ENCODE measurements at regions of chr3 and their contacts with region 1.

Region 1: DNA sequence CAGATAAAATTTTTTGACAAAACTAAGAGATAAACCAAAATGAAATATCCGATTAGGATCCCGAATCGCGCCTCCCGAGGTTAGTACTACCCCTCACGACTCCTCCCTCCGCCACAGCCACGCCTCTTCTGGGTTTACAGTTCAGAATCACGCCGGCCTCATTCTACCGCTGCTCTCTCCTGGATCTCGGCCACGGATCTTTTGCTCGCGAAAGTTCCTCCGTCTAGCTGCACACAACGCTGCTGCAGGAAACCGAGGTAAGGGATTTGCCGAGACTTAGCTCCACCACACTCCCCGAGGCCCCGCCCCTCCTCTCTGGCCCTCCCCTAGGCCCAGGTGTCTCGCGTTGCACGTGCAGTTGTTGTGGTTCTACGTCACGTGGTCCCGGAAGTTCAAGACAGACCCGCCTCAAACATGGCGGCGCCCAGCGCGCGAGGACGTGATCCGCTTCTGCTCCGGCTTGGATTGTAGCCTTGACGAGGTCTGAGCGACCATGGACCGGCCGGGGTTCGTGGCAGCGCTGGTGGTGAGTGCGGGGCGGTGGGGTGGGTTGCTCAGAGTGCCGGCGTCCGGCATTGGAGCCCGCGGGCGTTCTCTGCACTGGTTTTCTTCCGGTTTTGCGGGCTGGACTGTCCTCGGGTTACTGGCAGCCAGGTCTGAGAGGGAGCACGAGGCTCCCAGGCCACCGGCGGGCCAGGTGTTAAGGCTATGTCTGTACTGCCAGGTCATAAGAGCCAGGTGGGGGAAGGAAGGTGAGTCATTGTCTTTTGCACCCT is at the start of gene SLC25A26:
- DNase-seq: peak; percentile 96
- H3K4me3 Mint-ChIP-seq: peak within 1 kb of the TSS; percentile 93
- H3K27ac Mint-ChIP-seq: peak within 1 kb of the TSS; percentile 93
- H3K4me1 Mint-ChIP-seq: peaks cover 28% of the 10 kb centered on the region
- H3K27me3 Mint-ChIP-seq: no peaks in the 10 kb centered on the region
- total RNA-seq, gene SLC25A26: 15.5 and 16.9 TPM in 2 replicates

Region 2: DNA sequence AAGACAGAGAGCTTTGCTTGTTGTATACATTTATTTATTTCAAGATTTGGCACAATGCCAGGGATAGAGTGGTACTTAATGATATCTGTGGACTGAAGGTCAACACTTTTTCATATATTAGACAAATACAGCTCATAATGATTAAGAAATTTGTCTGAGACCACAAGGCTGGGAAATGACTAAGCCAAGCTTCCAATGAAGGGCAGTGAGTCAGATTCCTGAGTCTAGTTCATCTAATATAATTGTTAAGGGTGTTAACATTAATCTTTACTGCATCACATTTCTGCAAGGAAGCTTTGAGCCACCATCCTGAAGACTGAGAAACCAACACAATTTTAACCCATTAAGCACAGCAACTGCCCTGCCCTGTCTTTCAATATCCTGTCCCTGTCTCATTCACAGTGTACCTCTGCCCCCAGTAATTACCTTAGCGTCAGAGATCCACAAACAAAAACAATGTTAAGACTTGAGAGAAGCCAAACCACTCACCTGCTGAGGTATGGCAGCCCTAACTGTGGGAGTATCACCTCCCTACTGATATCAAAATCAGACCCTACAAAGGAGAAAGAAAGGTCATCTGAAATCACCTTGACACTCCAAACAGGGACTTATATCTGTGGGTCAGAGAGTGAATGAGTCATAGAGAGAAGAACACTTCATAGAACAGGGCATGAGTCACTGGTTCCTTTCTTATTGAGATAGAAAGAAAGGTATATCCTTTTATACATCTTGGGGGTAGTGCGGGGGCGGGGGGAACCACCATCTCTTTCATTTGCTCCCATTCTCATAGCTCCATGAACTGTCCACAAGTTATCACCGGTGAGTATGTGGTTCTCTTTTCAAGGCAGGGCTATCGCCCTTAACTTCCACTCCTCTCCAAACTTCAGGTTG is 256.8 kb before region 1 on chr3:
- intact Hi-C with region 1: loop called (anchors 5 kb)
- DNase-seq: no peak
- H3K4me3 Mint-ChIP-seq: peak overlapping the region; percentile 32
- H3K27ac Mint-ChIP-seq: peak overlapping the region; percentile 96
- H3K4me1 Mint-ChIP-seq: peaks cover 33% of the 10 kb centered on the region
- H3K27me3 Mint-ChIP-seq: no peaks in the 10 kb centered on the region

Region 3: DNA sequence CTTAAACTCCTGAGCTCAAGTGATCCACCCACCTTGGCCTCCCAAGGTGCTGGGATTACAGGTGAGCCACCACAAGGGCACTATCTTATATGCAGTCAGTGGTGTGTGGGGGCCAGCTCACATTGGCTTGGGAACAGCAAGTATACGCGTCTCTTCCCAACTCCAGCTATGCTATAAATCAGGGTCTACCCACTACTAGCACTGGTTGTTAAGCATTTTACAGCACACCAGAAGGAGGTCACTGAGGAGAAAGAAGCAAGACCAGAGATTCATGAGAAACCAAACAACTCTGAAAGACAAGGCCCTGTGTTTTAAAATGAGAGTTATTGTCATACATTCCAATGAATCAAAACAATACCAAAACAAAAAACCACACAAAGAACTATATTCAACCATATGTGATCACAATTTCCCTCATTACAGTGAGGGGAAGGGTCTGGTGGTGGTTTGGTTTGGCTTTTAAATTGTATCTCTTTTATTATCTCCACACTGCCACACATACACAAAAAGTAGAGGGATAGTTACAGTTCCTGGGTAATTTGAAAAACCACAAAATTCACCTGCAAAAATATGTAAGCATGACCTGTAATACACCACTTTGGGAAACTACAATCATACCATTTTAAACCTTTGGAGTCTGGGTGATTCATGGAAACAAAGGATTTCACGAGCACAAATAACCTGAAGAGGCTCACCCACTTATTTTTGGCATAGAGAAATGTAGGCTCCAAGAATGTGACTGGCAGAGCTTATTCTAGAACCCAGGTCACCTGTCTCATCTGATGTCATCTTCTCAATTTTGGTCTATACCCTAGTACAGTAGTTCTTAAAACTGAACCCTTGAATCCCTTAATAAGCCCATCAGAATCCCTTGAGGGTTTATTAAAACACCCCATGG is 187.3 kb before region 1 on chr3:
- intact Hi-C with region 1: loop called (anchors 5 kb)
- DNase-seq: no peak
- H3K4me3 Mint-ChIP-seq: no peak overlapping the region
- H3K27ac Mint-ChIP-seq: peak overlapping the region; percentile 80
- H3K4me1 Mint-ChIP-seq: peaks cover 15% of the 10 kb centered on the region
- H3K27me3 Mint-ChIP-seq: peaks cover 24% of the 10 kb centered on the region

Region 4: DNA sequence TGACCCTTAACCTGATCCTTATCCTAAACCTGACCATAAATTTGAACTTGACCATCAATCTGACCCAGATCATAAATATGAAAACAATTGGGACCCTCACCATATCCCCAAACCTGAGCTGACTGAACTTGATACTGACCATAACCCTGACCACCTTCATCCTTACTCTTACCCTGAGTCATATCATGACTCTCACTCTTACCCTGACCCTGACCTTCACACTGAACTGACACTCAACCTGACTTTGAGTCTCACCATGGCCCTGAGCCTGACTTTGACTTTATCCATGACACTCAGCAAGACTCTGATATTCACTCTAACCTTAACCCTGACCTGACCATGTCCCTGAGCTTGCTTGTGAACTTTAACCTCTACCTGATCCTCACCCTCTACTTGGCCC is 34.2 kb before region 1 on chr3:
- intact Hi-C with region 1: no loop called
- DNase-seq: no peak
- H3K4me3 Mint-ChIP-seq: no peak overlapping the region
- H3K27ac Mint-ChIP-seq: no peak overlapping the region
- H3K4me1 Mint-ChIP-seq: no peaks in the 10 kb centered on the region
- H3K27me3 Mint-ChIP-seq: no peaks in the 10 kb centered on the region

Region 5: GRCh38 chr3:66239513-66240123 is 18.8 kb after region 1 on chr3:
- intact Hi-C with region 1: loop called (anchors 1 kb)
- DNase-seq: no peak
- H3K4me3 Mint-ChIP-seq: no peak overlapping the region
- H3K27ac Mint-ChIP-seq: peak overlapping the region; percentile 1
- H3K4me1 Mint-ChIP-seq: peaks cover 14% of the 10 kb centered on the region
- H3K27me3 Mint-ChIP-seq: no peaks in the 10 kb centered on the region

Region 6: DNA sequence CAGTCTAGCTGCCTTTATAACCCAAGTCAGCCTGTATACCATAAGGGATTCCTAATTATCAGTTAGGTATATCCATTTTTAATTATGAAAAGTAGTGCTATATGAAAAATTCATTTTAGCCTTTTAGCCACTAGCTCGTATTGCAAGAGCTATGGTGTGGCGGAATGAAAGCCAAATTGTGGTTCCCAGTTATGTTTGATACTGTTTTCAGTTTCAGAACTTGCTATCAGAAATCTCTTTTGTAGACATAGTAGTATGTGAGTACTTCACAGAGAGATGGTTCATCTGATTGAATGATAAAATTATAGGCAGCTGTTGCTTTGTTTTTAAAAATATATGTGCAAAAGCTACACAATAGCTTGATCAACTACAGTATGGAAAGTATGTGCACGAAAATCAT is 134.6 kb after region 1 on chr3:
- intact Hi-C with region 1: loop called (anchors 5 kb)
- DNase-seq: no peak
- H3K4me3 Mint-ChIP-seq: no peak overlapping the region
- H3K27ac Mint-ChIP-seq: no peak overlapping the region
- H3K4me1 Mint-ChIP-seq: peaks cover 32% of the 10 kb centered on the region
- H3K27me3 Mint-ChIP-seq: peaks cover 5% of the 10 kb centered on the region

Region 7: DNA sequence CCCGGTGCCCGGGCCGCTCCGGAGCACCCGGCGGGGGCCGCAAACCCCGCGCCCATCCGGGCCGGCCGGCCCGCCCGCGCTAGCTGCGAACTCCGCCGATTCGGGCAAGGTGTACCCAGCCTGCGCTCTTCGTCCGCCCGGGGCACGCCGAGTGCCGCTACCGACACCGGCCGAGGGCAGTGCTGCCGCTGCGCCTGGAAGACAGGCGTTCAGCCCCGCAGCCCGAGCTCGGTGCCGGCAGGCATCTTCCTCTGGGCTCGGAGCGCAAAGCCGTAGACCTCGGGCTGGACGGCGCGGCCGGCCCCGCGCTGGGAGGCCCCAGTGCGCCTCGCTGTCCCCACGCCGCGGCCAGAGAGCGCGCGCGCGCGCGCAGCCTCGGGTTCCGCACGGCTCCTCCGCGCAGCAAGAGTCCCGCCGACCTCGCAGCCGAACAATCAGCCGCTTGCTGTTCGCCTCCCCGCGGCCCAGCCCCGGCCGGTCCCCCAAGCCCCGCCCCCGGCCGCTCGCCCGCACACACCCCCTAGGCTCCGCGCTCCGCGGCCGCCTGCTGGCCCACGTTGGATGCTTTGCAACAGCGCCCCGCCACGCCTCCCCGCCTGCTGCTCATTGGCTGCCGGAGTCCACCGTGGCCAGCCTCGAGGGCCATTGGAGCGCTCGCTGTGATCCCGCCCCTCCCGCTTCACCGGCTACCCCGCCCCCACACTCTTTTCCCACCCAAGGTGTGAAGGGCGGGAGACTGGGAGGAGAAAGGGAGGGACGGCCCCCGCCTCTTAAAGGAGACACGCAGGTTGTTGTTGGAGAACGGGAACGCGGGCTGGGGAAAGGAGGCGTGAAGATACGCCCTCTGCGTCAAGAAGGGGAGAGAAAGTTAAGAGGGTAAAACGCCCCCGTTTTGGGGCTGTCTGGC is 280.0 kb after region 1 on chr3 and contains the start of gene LRIG1:
- intact Hi-C with region 1: loop called (anchors 2 kb)
- DNase-seq: peak; percentile 98
- H3K4me3 Mint-ChIP-seq: peak within 1 kb of the TSS; percentile 96
- H3K27ac Mint-ChIP-seq: peak within 1 kb of the TSS; percentile 84
- H3K4me1 Mint-ChIP-seq: peaks cover 59% of the 10 kb centered on the region
- H3K27me3 Mint-ChIP-seq: peaks cover 27% of the 10 kb centered on the region
- total RNA-seq, gene LRIG1: 42.5 and 47.9 TPM in 2 replicates

Measured in activated T-helper 2 cell treated with anti-CD3 and anti-CD28 coated beads, Interferon-gamma antibody, Interleukin-2, Interleukin-4, amounts not matched to agents 10 μg/mL and 5 μg/mL and 100 μg/mL, durations not matched to agents 14 hours and 24 hours and 36 hours (primary cell).